Activated CD4-positive, alpha-beta memory T cell treated with anti-CD3 and anti-CD28 coated beads for 36 hours (primary cell): ENCODE measurements at regions of chr4 and their contacts with region 1.

Region 1: GRCh38 chr4:38179690-38180377 is 219.6 kb downstream of the PTTG2 start:
- DNase-seq: peak; percentile 83
- H3K4me3 Mint-ChIP-seq: no peak overlapping the region
- H3K27ac Mint-ChIP-seq: peak overlapping the region; percentile 14
- H3K4me1 Mint-ChIP-seq: peaks cover 39% of the 10 kb centered on the region
- H3K27me3 Mint-ChIP-seq: no peaks in the 10 kb centered on the region

Region 2: DNA sequence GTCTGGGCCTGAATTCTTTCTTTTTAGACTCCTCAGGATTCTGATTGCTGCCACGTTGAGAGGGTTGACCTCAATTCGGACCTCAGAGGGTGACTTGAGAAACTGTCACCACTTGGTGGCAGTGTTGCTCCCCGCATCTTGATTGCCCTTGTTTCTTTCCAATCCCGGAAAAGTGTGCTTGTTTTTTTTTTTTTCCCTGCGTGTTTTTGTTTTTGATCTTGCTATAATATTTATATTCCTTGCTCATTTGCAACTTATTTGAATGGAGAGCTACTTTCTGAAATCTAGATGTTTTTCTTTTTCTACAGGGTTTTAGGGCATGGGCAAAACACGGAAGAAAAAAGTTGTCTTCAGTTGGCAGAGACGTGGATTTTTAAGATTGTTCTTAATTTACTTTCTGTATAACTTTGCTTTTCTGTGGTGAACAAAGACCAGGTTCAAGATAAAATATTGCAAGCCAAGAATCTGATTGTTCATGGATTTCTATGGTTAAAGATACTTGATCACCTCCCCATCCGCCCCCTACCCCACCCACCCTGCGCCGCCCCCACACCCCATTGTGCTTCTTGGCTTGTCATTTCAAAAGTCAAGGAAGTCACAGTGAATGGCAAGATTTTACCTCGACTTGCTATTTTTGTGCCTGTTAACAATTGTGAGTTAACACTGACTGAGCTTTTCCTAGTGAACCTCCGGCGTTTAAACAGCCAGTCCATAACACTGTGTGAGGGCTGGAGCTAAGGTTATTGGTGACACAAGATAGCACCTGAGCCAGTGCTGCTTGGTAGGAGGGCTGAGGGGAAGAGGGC is 117.5 kb before region 1 on chr4:
- CTCF ChIA-PET with region 1: interaction called, 29 read pairs
- POLR2A ChIA-PET with region 1: no interaction called
- intact Hi-C with region 1: loop called (anchors 1 kb)
- DNase-seq: peak; percentile 80
- H3K4me3 Mint-ChIP-seq: peak overlapping the region; percentile 77
- H3K27ac Mint-ChIP-seq: peak overlapping the region; percentile 70
- H3K4me1 Mint-ChIP-seq: peaks cover 14% of the 10 kb centered on the region
- H3K27me3 Mint-ChIP-seq: no peaks in the 10 kb centered on the region

Region 3: DNA sequence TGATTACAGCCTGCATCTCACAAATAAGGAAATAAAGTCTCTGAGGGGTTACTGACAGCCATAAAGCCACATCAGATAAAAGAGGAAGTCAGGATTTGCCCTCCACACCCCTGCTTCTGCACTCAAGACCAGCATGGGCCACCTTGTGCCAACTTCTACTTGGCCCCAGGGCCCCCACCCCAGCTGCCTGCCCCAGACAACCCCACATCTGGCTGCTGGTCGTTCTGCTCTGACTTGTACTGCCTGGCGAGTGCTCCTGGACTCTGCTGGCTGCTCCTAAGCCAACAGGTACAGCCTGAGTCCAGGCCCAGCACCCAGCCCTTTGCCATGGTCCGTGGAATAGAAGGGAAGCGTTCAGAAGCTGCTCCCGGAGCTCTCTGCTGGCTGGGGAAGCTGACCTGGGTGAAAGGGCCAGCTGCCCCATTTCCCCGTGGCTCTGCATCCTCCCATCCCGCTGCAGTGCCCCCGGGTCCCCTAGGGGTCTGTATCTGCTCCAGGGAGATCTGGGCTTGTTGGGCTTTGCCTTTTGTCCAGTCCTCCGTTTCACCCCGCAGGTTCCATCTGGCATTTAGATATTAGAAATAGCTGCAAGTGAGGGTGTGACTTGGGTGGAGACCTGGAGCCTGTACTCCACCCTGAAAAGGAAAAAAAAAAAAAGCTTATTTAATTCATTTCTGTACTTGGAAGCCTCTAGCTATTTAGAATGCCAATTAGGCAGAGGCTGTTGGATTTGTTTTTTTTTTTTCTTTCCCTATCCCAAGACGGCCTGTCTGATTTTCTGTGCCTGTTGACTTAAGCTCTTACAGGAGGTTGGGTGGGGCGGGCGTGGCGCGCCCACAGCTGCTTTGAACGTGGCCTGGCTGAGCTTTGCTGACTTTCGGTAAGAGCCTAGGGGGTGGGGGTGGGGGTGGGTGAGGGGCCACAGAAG is 24.9 kb before region 1 on chr4:
- CTCF ChIA-PET with region 1: interaction called, 13 read pairs
- POLR2A ChIA-PET with region 1: no interaction called
- intact Hi-C with region 1: no loop called
- DNase-seq: peak; percentile 42
- H3K4me3 Mint-ChIP-seq: no peak overlapping the region
- H3K27ac Mint-ChIP-seq: peak overlapping the region; percentile 34
- H3K4me1 Mint-ChIP-seq: peaks cover 42% of the 10 kb centered on the region
- H3K27me3 Mint-ChIP-seq: no peaks in the 10 kb centered on the region

Region 4: DNA sequence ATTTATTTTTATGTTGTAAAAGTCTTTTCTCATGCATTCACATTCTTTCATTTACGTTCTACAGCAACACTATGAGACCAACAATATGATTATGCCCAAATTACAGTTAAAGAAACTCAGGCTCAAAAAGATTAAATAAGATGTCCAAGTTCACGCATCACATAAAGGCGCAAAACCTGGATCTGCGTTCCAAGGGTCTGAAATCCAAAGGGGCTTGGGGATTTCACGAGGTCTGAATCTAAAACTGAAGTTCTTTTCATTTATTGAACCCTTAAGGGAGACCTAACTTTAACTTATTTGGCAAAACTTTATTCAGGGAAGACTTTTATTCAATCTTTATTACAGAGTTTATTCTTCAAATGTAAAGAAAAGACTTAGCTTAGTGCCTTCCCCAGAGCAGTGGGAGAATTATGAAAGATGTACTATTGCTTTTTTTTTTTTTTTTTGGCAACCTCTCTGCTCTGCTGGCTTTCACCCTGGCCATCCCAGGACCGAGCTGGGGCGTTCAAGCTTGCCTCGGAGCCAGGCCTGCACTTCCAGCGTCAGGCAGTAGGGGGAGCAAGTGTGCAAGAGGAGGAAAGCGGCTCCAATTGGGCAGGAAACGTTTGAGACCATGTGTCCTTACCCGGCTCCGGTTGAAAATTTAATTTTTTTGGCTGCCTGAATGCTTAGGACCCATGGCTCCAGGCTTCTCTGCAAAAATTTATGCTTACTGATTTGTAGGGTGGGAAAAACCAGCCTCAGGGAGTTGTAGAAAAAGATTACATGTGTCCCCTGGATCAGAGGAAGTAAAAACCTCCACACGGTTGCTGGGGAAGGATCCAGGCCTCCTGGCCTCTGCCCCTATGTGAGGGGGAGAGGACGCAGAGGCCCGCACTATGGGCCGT is 139.9 kb after region 1 on chr4:
- CTCF ChIA-PET with region 1: interaction called, 71 read pairs
- POLR2A ChIA-PET with region 1: no interaction called
- intact Hi-C with region 1: loop called (anchors 1 kb)
- DNase-seq: peak; percentile 95
- H3K4me3 Mint-ChIP-seq: peak overlapping the region; percentile 77
- H3K27ac Mint-ChIP-seq: peak overlapping the region; percentile 85
- H3K4me1 Mint-ChIP-seq: peaks cover 34% of the 10 kb centered on the region
- H3K27me3 Mint-ChIP-seq: no peaks in the 10 kb centered on the region

Region 5: GRCh38 chr4:38675146-38676121 is 495.6 kb after region 1 on chr4:
- CTCF ChIA-PET with region 1: interaction called, 165 read pairs
- POLR2A ChIA-PET with region 1: no interaction called
- intact Hi-C with region 1: loop called (anchors 1 kb)
- DNase-seq: peak; percentile 89
- H3K4me3 Mint-ChIP-seq: peak overlapping the region; percentile 22
- H3K27ac Mint-ChIP-seq: peak overlapping the region; percentile 19
- H3K4me1 Mint-ChIP-seq: peaks cover 79% of the 10 kb centered on the region
- H3K27me3 Mint-ChIP-seq: no peaks in the 10 kb centered on the region

Region 6: GRCh38 chr4:38730830-38731646 is 551.2 kb after region 1 on chr4:
- CTCF ChIA-PET with region 1: interaction called, 101 read pairs
- POLR2A ChIA-PET with region 1: no interaction called
- intact Hi-C with region 1: loop called (anchors 1 kb)
- DNase-seq: peak; percentile 90
- H3K4me3 Mint-ChIP-seq: no peak overlapping the region
- H3K27ac Mint-ChIP-seq: no peak overlapping the region
- H3K4me1 Mint-ChIP-seq: peaks cover 14% of the 10 kb centered on the region
- H3K27me3 Mint-ChIP-seq: no peaks in the 10 kb centered on the region

Region 7: DNA sequence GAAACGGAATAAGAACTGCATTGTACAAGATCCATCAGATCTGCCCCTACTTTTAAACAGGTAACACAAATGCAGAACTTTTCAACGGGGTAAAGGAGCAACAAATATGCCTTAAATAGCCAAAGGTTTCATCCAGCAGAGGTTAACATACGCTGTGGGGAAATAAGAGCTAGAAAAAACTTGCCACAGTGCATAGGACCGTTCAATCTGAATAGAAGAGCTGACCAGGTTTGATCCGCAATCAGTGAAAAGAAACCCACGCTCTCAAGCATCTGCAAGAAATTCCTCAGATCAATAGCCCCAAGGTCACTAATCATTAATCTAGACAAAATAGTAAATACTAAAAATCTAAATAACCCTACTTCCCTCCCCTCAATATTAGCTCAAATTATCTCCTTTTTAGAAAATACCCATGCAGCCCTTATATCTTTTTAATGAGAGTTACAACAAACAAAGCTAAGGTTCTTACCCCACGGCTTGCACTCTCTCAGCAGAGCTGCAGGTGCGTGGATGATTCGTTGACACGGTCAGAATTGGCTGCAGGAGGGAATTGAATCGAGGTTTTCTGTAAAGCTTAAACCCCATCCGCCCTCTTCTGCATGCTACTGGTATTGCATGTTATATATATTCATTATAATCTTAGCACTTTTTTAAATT is 602.7 kb after region 1 on chr4 and contains the start of gene TLR10:
- CTCF ChIA-PET with region 1: interaction called, 31 read pairs
- POLR2A ChIA-PET with region 1: no interaction called
- intact Hi-C with region 1: no loop called
- DNase-seq: peak; percentile 35
- H3K4me3 Mint-ChIP-seq: peak within 1 kb of the TSS; percentile 23
- H3K27ac Mint-ChIP-seq: no peak within 1 kb of the TSS
- H3K4me1 Mint-ChIP-seq: peaks cover 4% of the 10 kb centered on the region
- H3K27me3 Mint-ChIP-seq: peaks cover 2% of the 10 kb centered on the region
- total RNA-seq, gene TLR10: 0.05 TPM in 1 of 2 experiments, not detected in the other